ENCODE measurements at regions of chr10 and their contacts with region 1.

Region 1: DNA sequence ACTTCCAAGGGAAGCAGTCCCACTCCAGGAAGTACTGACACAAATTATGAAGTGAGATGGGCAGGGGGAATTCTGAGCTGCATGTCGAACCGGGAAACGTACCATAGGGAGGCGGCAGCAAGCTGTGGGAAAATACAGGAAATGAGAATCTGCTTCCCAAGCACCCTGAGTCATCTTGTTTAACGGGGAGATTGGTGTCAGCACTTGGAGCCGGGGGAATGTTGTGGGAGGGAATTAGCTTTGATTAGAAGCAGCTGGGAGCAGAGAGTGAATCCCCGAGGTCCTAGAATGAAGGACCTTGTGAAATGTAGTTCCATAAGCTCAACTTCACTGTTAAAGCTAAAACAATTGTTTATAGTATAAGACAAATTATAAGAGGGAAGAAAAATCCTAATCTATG is 141.4 kb upstream of the PRKCQ start:
- DNase-seq: peak; percentile 96
- H3K4me3 ChIP-seq: no peak overlapping the region
- H3K27ac ChIP-seq: peak overlapping the region; percentile 97
- H3K27me3 ChIP-seq: no peaks in the 10 kb centered on the region
- CTCF ChIP-seq: peak; percentile 59

Region 2: GRCh38 chr10:6741541-6741941 is 20.1 kb after region 1 on chr10:
- CTCF ChIA-PET with region 1: no interaction called
- POLR2A ChIA-PET with region 1: interaction called, 10 read pairs
- DNase-seq: peak; percentile 70
- H3K4me3 ChIP-seq: no peak overlapping the region
- H3K27ac ChIP-seq: peak overlapping the region; percentile 42
- H3K27me3 ChIP-seq: no peaks in the 10 kb centered on the region
- CTCF ChIP-seq: no peak

Region 3: DNA sequence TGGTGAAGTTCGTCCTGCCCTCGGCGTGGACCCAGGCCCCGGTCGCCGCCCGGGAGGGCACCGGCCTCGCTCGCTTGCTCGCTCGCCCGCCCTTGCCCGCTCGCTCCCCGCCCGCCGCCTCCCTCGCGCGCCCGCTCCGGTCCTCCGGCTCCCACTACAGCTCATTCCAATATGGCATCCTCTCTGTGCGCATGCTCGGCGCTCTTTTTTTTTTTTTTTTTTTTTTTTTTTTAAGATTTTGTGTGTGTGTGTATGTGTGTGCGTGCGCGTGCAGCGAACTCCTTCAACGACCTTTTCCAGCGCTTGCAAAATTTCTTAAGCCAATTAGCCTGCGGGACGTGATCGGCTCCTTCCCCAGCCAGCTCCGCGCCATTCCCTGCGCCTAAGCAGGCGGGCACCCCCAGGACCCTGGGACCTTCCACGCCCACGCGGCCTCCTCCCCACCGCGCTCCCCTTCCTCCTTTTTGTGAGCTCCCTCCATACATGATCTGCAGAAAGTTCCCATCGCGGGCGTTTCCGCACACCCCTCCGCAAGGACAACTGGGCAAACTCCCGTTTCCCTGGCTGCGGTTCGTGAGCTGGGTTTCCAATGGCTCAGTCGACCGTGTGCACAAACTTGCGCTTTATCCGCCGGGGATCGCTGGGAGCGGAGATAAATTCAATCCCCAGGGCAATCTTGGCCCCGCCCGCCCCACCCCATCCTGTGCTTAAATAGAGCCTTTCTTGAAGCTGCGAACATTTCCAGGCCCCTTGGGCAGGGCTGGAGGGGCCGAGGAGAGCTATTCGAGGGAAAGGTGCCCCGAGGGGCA is 689.6 kb after region 1 on chr10 and contains the start of gene SFMBT2:
- CTCF ChIA-PET with region 1: interaction called, 13 read pairs
- POLR2A ChIA-PET with region 1: interaction called, 4 read pairs
- DNase-seq: peak; percentile 10
- H3K4me3 ChIP-seq: peak within 1 kb of the TSS; percentile 67
- H3K27ac ChIP-seq: no peak within 1 kb of the TSS
- H3K27me3 ChIP-seq: peaks cover 49% of the 10 kb centered on the region
- CTCF ChIP-seq: 0 out of 2 replicates have a peak, but pooled peaks have one; percentile 23
- polyA plus RNA-seq, gene SFMBT2: 1.3 and 1.4 TPM in 2 replicates

Measured in AG04450 (cell line).